ENCODE measurements at regions of chr1 and their contacts with region 1.

Region 1: GRCh38 chr1:3453891-3454810 is at the start of gene ARHGEF16:
- H3K4me3 Mint-ChIP-seq: peak within 1 kb of the TSS; percentile 58
- H3K27ac Mint-ChIP-seq: no peak within 1 kb of the TSS
- H3K4me1 Mint-ChIP-seq: peaks cover 9% of the 10 kb centered on the region
- H3K27me3 Mint-ChIP-seq: peaks cover 64% of the 10 kb centered on the region

Region 2: GRCh38 chr1:3483801-3484444 is 29.8 kb after region 1 on chr1:
- intact Hi-C with region 1: loop called (anchors 2 kb)
- H3K4me3 Mint-ChIP-seq: no peak overlapping the region
- H3K27ac Mint-ChIP-seq: no peak overlapping the region
- H3K4me1 Mint-ChIP-seq: no peaks in the 10 kb centered on the region
- H3K27me3 Mint-ChIP-seq: peaks cover 4% of the 10 kb centered on the region